Stomach (tissue), 19 donors: ENCODE measurements at regions of chr3 and their contacts with region 1.

Region 1: DNA sequence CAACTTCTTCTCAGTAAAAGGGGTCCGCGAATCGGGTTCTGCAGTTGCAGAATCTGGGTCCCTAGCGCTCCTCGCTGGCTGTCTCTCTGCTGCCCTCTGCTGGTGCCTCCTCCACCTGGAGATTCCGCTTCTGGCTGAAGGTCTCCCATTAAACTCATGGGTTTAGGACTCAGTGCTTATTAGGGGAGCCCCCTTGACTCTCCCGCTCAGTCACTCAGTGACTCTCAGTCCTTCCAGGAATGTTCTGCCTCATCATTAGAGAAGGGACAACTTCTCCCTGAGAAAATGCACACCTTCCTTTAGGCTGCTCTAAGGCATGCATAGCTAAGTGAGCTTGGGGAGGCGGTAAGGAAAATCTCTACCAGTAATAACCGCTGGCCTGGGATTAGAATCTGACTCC is 7.1 kb downstream of the CPN2 start:
- DNase-seq: peak; percentile 84 to 89
- H3K4me3 ChIP-seq: no peak overlapping the region
- H3K27ac ChIP-seq: no peak overlapping the region
- H3K4me1 ChIP-seq: no peaks in the 10 kb centered on the region
- H3K27me3 ChIP-seq: no peaks in the 10 kb centered on the region
- CTCF ChIP-seq: peak in 5 of 7 experiments; percentile 66 to 92 (median 85)
- EP300 ChIP-seq: no peak
- POLR2A ChIP-seq: no peak

Region 2: GRCh38 chr3:194404365-194405140 is 60.5 kb after region 1 on chr3:
- intact Hi-C with region 1: loop called (anchors 5 kb)
- DNase-seq: peak in 1 of 2 donors; percentile 83
- H3K4me3 ChIP-seq: no peak overlapping the region
- H3K27ac ChIP-seq: no peak overlapping the region
- H3K4me1 ChIP-seq: peaks cover 0 to 11% (median 0%) of the 10 kb centered on the region in 4 donors
- H3K27me3 ChIP-seq: peaks cover 0 to 4% (median 0%) of the 10 kb centered on the region in 3 donors
- CTCF ChIP-seq: peak in 5 of 7 experiments; percentile 49 to 59 (median 52)
- EP300 ChIP-seq: no peak
- POLR2A ChIP-seq: no peak

Region 3: GRCh38 chr3:194592798-194593752 is 249.1 kb after region 1 on chr3:
- intact Hi-C with region 1: loop called (anchors 10 kb)
- DNase-seq: peak in 1 of 2 donors; percentile 29
- H3K4me3 ChIP-seq: no peak overlapping the region
- H3K27ac ChIP-seq: no peak overlapping the region
- H3K4me1 ChIP-seq: peaks cover 0 to 28% (median 9%) of the 10 kb centered on the region in 4 donors
- H3K27me3 ChIP-seq: no peaks in the 10 kb centered on the region
- CTCF ChIP-seq: no peak
- EP300 ChIP-seq: no peak
- POLR2A ChIP-seq: no peak